GM23248 (cell line): ENCODE measurements at regions of chr6 and their contacts with region 1.

Region 1: DNA sequence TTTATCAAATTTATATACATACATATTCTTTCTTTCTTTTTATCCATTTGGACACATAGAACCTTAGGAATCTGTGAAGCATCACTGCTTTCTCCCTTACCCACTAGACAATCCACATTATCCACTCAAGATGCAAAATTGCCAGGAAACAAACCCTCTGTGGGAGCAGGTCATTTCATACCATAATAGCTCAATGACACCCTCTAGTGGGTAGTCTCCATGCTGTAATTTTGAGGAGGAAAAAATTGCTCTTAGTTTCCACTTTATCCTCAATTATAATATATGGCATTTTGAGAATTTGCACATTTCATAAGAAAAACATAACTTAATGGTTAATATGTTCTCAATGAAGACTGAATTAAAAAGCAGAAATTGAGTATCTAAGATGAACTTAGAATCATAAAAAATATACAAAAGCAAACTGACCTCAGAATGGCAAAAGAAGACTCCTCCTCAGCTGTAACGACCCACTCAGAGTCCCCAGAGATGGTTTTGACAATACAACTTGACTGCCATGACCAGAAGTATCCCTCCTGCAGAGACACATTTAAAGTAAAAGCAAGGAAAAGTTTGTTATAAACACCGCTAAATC is 164.1 kb downstream of the FRK start:
- DNase-seq: peak; percentile 64
- H3K4me3 ChIP-seq: no peak overlapping the region
- H3K27ac ChIP-seq: no peak overlapping the region
- H3K4me1 ChIP-seq: peaks cover 13% of the 10 kb centered on the region
- H3K27me3 ChIP-seq: no peaks in the 10 kb centered on the region

Region 2: DNA sequence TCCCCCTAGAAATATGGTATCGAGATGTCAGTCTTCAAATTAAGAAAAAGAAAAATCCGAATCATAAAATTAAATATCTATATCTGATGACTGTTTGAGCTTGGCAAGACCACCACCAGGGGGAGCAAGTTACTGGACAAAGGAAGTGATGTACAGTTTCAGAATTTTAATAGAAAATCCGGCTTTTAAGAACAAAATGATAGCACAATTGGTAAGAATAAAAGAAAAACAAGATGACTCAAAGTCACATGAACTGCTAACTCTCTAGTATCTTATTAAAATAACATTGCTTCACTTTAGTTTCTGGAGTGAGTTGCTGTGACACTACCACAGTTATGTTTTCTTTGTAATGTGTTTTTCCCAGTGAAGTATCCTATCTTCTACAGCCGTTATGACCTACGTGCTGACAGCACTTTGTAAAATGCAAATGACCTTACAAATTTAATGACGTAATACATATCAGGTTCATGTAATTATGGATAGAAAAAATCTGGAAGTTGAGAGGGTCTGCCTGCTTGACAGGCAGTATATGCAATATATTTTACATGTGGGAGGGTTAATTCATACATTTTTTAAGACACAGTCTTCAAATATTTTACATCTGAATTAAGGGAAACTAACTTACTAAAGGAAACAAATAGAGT is 1148.5 kb before region 1 on chr6:
- in situ Hi-C with region 1: loop called (anchors 10 kb)
- DNase-seq: peak; percentile 74
- H3K4me3 ChIP-seq: no peak overlapping the region
- H3K27ac ChIP-seq: no peak overlapping the region
- H3K4me1 ChIP-seq: no peaks in the 10 kb centered on the region
- H3K27me3 ChIP-seq: no peaks in the 10 kb centered on the region